Aorta (tissue), 5 donors: ENCODE measurements at regions of chr7 and their contacts with region 1.

Region 1: GRCh38 chr7:831596-832166 is 595 bp upstream of the SUN1 start:
- DNase-seq: no peak
- ATAC-seq: peak; percentile 80
- H3K4me3 ChIP-seq: peak overlapping the region; percentile 0 to 7
- H3K27ac ChIP-seq: peak overlapping the region; percentile 4 to 99
- H3K4me1 ChIP-seq: peaks cover 2 to 4% of the 10 kb centered on the region in 2 donors
- H3K27me3 ChIP-seq: no peaks in the 10 kb centered on the region

Region 2: DNA sequence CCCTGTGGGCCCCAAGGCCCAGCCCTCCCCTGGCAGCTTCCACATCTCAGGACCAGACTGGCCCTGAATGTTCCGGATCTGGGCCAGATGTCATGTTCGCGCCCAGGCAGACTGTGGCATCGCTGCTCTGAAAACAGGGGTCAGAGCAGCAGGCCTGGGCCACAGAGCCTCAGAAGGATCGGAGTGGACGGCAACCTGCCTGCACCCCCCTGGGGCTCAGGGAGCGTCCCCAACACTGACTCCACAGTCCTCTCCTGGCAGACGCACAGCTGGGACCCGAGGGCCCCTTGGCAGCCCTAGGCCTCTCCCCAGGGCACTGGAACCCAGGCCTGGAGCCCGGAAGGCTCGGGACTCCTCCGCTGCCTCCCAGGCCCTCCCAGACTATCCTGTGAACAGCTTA is 196.4 kb before region 1 on chr7:
- intact Hi-C with region 1: no loop called
- DNase-seq: peak in 1 of 2 donors; percentile 67
- ATAC-seq: no peak
- H3K4me3 ChIP-seq: no peak overlapping the region
- H3K27ac ChIP-seq: no peak overlapping the region
- H3K4me1 ChIP-seq: no peaks in the 10 kb centered on the region
- H3K27me3 ChIP-seq: no peaks in the 10 kb centered on the region

Region 3: GRCh38 chr7:815284-816216 is 16.1 kb before region 1 on chr7:
- intact Hi-C with region 1: loop called in 1 of 2 experiments (anchors 2 kb)
- DNase-seq: peak in 1 of 2 donors; percentile 79
- ATAC-seq: no peak
- H3K4me3 ChIP-seq: peak overlapping the region in 1 of 2 donors; percentile 22
- H3K27ac ChIP-seq: peak overlapping the region; percentile 1 to 70
- H3K4me1 ChIP-seq: peaks cover 0 to 3% of the 10 kb centered on the region in 2 donors
- H3K27me3 ChIP-seq: no peaks in the 10 kb centered on the region

Region 4: DNA sequence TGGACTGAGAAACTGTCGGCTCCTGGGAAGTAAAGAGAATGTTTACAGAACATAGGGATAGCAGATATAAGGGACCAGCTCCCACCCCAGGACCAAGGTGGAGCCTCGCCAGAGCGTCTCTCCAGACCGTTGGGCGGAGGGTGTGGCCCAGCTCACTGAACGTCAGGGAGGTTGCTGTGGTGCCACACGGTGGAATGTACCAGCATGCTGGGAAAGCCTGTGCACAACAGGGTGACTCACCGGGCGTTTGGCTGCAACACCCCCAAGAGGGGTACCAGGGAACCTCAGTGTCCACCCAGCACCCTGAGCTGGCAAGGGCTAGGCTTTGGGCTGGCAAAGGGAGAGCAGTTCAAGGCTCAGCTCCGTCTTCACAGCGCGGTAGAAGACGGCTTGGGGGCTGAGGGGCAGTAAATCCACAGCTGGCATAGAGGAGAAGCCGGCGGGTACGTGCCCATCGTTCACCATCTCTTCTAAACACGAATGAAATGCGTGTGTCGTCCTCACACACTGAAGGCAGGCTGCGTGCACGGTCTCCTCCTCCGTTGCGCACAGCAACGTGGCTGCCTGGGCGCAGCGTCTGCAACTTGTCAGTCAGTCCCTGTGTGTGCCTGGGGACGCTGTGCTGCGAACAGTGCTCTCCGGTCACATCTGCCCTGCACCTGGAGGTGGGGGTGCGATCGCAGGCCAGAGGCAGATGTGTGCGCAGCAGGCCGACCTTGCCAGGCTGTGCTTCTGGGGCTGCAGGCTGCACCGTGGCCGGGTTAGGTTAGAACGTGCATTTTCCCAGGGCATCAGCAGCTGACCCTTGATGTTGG is 36.2 kb after region 1 on chr7:
- intact Hi-C with region 1: loop called in 1 of 2 experiments (anchors 5 kb)
- DNase-seq: peak; percentile 90 to 93
- ATAC-seq: peak; percentile 88
- H3K4me3 ChIP-seq: no peak overlapping the region
- H3K27ac ChIP-seq: peak overlapping the region; percentile 79 to 98
- H3K4me1 ChIP-seq: peaks cover 0 to 2% of the 10 kb centered on the region in 2 donors
- H3K27me3 ChIP-seq: no peaks in the 10 kb centered on the region